Head of caudate nucleus (tissue), 42 donors: ENCODE measurements at regions of chr1 and their contacts with region 1.

Region 1: DNA sequence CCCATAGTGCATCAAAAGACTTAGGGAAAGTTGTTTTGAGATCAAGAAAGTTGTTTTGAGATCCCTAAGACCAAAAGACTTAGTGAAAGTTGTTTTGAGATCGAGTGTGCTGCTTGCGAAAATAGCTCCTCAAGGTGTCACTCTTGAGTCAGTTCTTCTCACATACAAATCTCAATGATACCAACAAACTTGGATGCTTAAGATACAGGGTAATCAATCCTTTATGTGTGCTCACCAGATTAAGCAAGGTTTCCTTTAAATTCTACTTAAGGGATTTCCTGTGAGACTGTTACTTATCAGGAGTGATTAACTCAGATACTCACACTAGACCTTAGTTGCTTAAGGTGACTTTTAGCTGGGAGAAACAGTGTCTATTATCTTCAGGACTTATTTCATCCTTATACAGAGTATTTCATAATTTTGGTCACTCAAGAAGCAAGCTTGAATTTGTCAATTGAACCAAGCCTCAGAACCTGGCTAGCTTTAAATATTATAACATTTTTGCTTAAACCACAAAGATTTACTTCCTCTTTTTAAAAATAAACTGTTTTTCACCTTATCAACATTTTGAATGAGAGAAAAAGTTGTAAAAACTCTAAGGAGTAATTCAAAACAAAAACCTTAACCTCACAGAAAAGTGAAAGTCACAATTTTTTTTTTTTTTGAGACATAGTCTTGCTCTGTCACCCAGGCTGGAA is 8.0 kb upstream of the RLF start:
- DNase-seq: peak in 18 of 42 donors; percentile 19 to 70 (median 36)

Region 2: GRCh38 chr1:40096977-40097782 is 56.0 kb before region 1 on chr1 and contains the start of gene PPT1:
- intact Hi-C with region 1: loop called (anchors 10 kb)
- DNase-seq: peak; percentile 75 to 95 (median 90)

Region 3: DNA sequence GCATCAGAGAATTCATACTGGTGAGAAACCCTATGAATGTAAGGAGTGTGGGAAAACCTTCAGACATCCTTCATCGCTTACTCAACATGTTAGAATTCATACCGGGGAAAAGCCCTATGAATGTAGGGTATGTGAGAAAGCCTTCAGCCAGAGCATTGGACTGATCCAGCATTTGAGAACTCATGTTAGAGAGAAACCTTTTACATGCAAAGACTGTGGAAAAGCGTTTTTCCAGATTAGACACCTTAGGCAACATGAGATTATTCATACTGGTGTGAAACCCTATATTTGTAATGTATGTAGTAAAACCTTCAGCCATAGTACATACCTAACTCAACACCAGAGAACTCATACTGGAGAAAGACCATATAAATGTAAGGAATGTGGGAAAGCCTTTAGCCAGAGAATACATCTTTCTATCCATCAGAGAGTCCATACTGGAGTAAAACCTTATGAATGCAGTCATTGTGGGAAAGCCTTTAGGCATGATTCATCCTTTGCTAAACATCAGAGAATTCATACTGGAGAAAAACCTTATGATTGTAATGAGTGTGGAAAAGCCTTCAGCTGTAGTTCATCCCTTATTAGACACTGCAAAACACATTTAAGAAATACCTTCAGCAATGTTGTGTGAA is 309.9 kb after region 1 on chr1:
- intact Hi-C with region 1: no loop called
- DNase-seq: no peak